H1 (cell line): ENCODE measurements at regions of chr9 and their contacts with region 1.

Region 1: DNA sequence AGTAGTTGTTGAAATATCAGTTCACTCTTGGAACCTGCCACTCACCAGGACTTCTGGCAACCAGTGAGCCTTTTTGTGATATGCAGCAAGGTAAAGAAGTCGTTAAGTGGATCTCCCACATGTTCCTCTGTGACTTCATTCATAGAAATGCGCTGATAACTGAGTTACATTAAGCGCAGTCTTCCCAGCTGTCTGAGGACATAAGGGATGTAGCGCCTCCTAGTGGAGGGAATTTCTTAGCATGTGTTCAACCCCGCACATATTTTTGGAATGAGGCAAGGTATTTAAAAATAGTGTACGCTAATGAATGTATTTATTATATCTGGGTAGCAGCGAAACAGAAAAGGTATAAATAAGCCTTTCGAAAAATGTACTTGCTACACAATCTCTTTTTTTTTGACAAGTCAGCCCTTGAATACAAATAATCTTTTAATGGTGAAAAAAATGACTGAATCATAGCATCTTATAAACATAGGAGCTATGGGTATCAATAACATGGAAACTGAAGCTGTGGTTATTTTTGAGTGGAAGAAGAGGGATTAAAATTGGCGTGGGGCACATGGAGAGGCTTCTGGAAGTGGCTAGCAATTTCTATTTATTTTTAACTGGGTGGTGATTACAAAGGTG is 38.0 kb downstream of the PALM2AKAP2 start:
- DNase-seq: peak; percentile 41 to 69
- H3K4me3 ChIP-seq: no peak overlapping the region
- H3K27ac ChIP-seq: no peak overlapping the region
- H3K4me1 ChIP-seq: peaks cover 0 to 5% (median 0%) of the 10 kb centered on the region in 4 experiments; a peak in 1 of 7 replicates
- H3K27me3 ChIP-seq: no peaks in the 10 kb centered on the region
- CTCF ChIP-seq: peak in 2 of 3 experiments; percentile 78 to 81; a peak in 3 of 4 replicates
- EP300 ChIP-seq: peak in 1 of 2 experiments; percentile 14; a peak in 1 of 3 replicates
- POLR2A ChIP-seq: no peak
- RAD21 ChIP-seq: peak; percentile 85 to 89

Region 2: GRCh38 chr9:109799792-109800191 is 18.2 kb before region 1 on chr9:
- CTCF ChIA-PET with region 1: interaction called, 22 read pairs
- POLR2A ChIA-PET with region 1: no interaction called
- DNase-seq: no peak
- H3K4me3 ChIP-seq: no peak overlapping the region
- H3K27ac ChIP-seq: no peak overlapping the region
- H3K4me1 ChIP-seq: no peaks in the 10 kb centered on the region
- H3K27me3 ChIP-seq: no peaks in the 10 kb centered on the region
- CTCF ChIP-seq: no peak
- EP300 ChIP-seq: no peak
- POLR2A ChIP-seq: no peak
- RAD21 ChIP-seq: no peak

Region 3: GRCh38 chr9:109806506-109807115 is 11.3 kb before region 1 on chr9:
- CTCF ChIA-PET with region 1: interaction called, 22 read pairs
- POLR2A ChIA-PET with region 1: no interaction called
- DNase-seq: no peak
- H3K4me3 ChIP-seq: no peak overlapping the region
- H3K27ac ChIP-seq: no peak overlapping the region
- H3K4me1 ChIP-seq: no peaks in the 10 kb centered on the region
- H3K27me3 ChIP-seq: no peaks in the 10 kb centered on the region
- CTCF ChIP-seq: no peak
- EP300 ChIP-seq: no peak
- POLR2A ChIP-seq: no peak
- RAD21 ChIP-seq: no peak